ENCODE measurements at regions of chr1 and their contacts with region 1.

Region 1: DNA sequence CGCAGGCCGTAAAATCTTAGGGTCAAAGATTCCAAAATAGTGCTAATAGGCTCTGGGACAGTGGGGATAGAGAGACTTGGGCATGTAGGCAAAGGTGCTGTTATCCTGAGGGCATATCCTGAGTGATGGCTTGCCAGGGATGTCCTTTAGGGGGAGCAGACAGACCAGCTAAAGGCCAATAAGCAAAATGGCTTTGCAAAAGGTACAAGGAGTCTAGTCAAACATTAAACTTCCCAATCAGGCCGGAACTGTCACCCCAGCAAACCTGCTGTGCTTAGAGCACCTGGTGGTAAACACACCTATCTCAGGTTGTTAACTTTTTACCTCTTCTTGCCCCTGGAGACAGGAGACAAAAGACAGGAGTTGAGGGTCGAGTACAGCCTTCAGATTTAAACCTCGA is 49.1 kb downstream of the TRABD2B start:
- DNase-seq: peak; percentile 69 to 80
- H3K4me3 ChIP-seq: no peak overlapping the region
- H3K4me3 Mint-ChIP-seq: no peak overlapping the region
- H3K27ac Mint-ChIP-seq: no peak overlapping the region
- H3K4me1 ChIP-seq: peaks cover 10% of the 10 kb centered on the region; the same call in 1 of the 2 replicates
- H3K4me1 Mint-ChIP-seq: peaks cover 16% of the 10 kb centered on the region
- H3K27me3 ChIP-seq: no peaks in the 10 kb centered on the region
- H3K27me3 Mint-ChIP-seq: no peaks in the 10 kb centered on the region
- CTCF ChIP-seq: peak; percentile 62 to 66

Region 2: DNA sequence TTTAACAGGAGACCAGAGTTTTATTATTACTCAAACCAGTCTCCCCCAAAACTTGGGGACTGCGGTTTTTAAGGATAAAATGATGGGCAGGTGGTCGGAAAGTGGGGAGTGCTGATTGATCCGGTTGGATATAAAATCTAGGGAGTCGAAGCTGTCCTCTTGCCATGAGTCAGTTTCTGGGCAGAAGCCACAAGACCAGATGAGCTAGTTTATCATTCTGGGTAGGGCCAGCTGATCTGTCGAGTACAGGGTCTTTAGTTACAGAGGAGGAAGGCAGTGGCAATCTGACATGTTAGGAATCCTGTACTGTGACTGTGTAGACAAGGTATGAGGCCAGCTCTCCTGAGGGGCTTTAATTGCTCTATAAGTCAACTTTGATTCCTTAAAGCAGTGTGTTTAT is 555.0 kb before region 1 on chr1:
- CTCF ChIA-PET with region 1: no interaction called
- POLR2A ChIA-PET with region 1: no interaction called
- intact Hi-C with region 1: no loop called
- DNase-seq: no peak
- H3K4me3 ChIP-seq: no peak overlapping the region
- H3K4me3 Mint-ChIP-seq: no peak overlapping the region
- H3K27ac Mint-ChIP-seq: no peak overlapping the region
- H3K4me1 ChIP-seq: peaks cover 31% of the 10 kb centered on the region
- H3K4me1 Mint-ChIP-seq: peaks cover 45% of the 10 kb centered on the region
- H3K27me3 ChIP-seq: no peaks in the 10 kb centered on the region
- H3K27me3 Mint-ChIP-seq: no peaks in the 10 kb centered on the region
- CTCF ChIP-seq: no peak

Region 3: DNA sequence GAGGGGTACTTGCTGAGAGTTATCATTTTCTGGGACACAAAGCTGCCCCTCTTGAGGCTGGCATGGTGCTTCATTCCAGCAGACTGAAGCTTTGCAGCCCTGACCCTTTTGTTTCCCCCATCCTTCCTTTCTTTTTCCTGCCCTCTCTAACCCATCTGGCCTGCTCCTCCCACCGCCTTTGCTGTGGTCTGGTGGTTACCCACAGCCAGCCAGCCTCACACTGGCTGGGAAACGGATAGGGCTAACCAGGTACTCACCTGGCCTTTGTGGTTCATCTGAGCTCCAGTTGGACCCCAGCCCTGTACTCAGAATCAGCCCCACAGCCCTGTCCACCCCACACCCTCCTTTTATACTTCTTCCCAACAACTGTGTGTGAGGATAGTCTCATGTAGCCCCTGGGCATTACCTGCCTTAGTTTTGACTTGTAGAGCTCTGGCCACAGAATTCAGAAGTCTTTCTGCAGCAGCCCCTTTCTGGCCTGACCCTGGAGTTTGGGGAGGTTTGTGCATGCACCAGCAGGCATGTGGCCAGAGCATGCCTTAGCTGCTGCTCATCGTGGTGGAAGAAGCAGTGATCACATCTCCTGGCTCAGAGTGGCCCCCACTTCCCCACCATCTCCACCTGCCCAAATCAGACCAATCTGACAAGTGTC is 88.9 kb before region 1 on chr1:
- CTCF ChIA-PET with region 1: no interaction called
- POLR2A ChIA-PET with region 1: no interaction called
- intact Hi-C with region 1: no loop called
- DNase-seq: no peak
- H3K4me3 ChIP-seq: no peak overlapping the region
- H3K4me3 Mint-ChIP-seq: no peak overlapping the region
- H3K27ac Mint-ChIP-seq: no peak overlapping the region
- H3K4me1 ChIP-seq: no peaks in the 10 kb centered on the region
- H3K4me1 Mint-ChIP-seq: no peaks in the 10 kb centered on the region
- H3K27me3 ChIP-seq: no peaks in the 10 kb centered on the region; the same call in 1 of the 2 replicates
- H3K27me3 Mint-ChIP-seq: peaks cover 2% of the 10 kb centered on the region
- CTCF ChIP-seq: no peak

Region 4: GRCh38 chr1:47986761-47987200 is 38.7 kb after region 1 on chr1:
- CTCF ChIA-PET with region 1: no interaction called
- POLR2A ChIA-PET with region 1: no interaction called
- intact Hi-C with region 1: no loop called
- DNase-seq: no peak
- H3K4me3 ChIP-seq: no peak overlapping the region
- H3K4me3 Mint-ChIP-seq: no peak overlapping the region
- H3K27ac Mint-ChIP-seq: no peak overlapping the region
- H3K4me1 ChIP-seq: no peaks in the 10 kb centered on the region
- H3K4me1 Mint-ChIP-seq: peaks cover 6% of the 10 kb centered on the region
- H3K27me3 ChIP-seq: no peaks in the 10 kb centered on the region
- H3K27me3 Mint-ChIP-seq: no peaks in the 10 kb centered on the region
- CTCF ChIP-seq: no peak

Region 5: DNA sequence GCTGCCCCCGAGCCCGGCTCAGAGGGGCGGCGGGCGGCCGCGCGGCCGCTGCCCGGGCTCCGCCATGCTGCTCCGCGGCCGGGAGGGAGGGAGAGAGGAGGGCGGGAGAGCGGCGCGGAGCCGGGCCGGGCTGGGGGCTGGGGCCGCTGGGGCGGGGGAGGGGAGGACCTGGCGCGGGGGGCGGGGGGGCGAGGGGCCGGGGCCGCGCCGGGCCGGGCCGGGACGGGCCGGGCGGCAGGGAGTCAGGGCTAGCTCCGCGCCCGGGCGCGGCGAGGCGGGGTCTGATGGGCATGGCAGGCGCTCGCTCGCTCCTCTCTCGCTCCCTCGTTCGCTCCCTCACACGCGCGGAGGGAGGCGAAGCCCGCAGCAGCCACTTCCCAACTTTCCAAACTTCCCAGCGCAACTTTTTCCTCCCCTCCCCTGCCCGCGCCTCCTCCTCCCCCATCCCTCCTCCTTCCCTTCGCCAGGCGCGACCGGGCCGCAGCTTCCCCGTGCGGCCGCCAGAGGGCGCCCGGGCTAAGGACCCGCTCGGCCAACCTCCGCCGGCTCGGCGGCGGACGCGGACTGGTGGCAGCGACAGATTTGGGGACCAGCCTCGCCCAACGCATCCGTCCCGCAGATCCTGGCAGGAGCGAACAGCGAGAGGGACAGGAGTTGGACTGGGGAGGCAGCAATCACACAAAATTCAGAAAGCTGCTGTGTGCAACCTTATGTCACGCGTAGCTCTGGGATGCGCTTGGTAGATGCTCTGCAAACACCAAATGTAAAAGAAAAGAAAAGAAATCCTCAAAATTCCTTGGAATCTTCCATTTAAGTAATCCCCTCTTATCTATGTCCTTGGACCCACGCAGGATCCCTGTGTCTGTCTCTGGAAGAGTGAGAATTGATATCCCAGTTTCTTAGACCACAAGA is 49.4 kb after region 1 on chr1 and contains the start of gene TRABD2B:
- CTCF ChIA-PET with region 1: no interaction called
- POLR2A ChIA-PET with region 1: no interaction called
- intact Hi-C with region 1: loop called (anchors 1 kb)
- DNase-seq: peak; percentile 53 to 82
- H3K4me3 ChIP-seq: peak within 1 kb of the TSS; percentile 68
- H3K4me3 Mint-ChIP-seq: peak within 1 kb of the TSS; percentile 79
- H3K27ac Mint-ChIP-seq: no peak within 1 kb of the TSS
- H3K4me1 ChIP-seq: no peaks in the 10 kb centered on the region
- H3K4me1 Mint-ChIP-seq: peaks cover 8% of the 10 kb centered on the region
- H3K27me3 ChIP-seq: no peaks in the 10 kb centered on the region
- H3K27me3 Mint-ChIP-seq: peaks cover 17% of the 10 kb centered on the region
- CTCF ChIP-seq: peak; percentile 78 to 89
- total RNA-seq, gene TRABD2B: 0.36 and 0.39 TPM in 2 replicates

Region 6: GRCh38 chr1:48061162-48062136 is 113.3 kb after region 1 on chr1:
- CTCF ChIA-PET with region 1: no interaction called
- POLR2A ChIA-PET with region 1: no interaction called
- intact Hi-C with region 1: loop called (anchors 1 kb)
- DNase-seq: peak; percentile 45 to 69
- H3K4me3 ChIP-seq: no peak overlapping the region
- H3K4me3 Mint-ChIP-seq: no peak overlapping the region
- H3K27ac Mint-ChIP-seq: no peak overlapping the region
- H3K4me1 ChIP-seq: no peaks in the 10 kb centered on the region
- H3K4me1 Mint-ChIP-seq: peaks cover 10% of the 10 kb centered on the region
- H3K27me3 ChIP-seq: no peaks in the 10 kb centered on the region
- H3K27me3 Mint-ChIP-seq: no peaks in the 10 kb centered on the region
- CTCF ChIP-seq: peak; percentile 61 to 62

Region 7: DNA sequence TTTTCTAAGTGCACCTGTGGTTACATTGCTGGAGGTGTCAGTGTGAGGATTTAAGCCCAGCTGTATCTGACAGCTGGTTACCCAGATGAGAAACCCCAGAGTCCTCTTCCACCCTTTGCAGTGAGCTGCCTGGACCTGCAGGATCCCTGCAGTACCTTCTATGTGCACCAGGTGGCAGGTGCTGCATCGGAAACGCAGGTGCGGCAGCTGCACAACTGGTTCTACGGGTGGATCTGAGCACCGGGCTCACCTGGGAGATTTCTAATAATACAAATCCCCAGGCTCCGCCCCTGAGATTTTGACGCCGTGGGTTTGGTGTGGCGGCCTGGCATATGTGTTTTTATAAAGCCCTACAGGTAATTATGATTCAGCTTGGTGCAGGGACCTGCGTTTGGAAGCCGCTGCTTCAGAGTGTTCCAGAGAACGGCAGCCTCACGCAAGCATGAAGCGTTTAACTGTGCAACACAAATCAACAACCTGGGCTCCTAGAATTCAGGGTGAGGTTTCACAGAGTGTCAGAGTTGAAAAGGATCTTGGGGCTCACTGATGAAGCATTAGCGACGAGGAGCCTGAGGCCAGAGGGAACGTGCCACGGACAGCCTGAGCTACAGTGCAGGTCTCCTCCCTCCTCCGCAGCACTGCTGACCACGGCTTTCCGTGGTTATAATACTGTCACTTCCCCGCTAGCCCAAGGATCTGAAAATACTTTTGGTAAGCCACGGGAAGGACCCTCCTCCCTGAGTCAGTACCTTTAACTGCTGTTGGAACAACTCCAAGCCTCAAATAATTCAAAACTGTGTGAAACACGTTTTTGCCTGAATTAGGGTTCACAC is 145.8 kb after region 1 on chr1:
- CTCF ChIA-PET with region 1: no interaction called
- POLR2A ChIA-PET with region 1: no interaction called
- intact Hi-C with region 1: loop called (anchors 1 kb)
- DNase-seq: peak; percentile 85 to 90
- H3K4me3 ChIP-seq: peak overlapping the region; percentile 27
- H3K4me3 Mint-ChIP-seq: peak overlapping the region; percentile 77
- H3K27ac Mint-ChIP-seq: no peak overlapping the region
- H3K4me1 ChIP-seq: no peaks in the 10 kb centered on the region
- H3K4me1 Mint-ChIP-seq: no peaks in the 10 kb centered on the region
- H3K27me3 ChIP-seq: no peaks in the 10 kb centered on the region
- H3K27me3 Mint-ChIP-seq: peaks cover 3% of the 10 kb centered on the region
- CTCF ChIP-seq: peak; percentile 82 to 90

Region 8: DNA sequence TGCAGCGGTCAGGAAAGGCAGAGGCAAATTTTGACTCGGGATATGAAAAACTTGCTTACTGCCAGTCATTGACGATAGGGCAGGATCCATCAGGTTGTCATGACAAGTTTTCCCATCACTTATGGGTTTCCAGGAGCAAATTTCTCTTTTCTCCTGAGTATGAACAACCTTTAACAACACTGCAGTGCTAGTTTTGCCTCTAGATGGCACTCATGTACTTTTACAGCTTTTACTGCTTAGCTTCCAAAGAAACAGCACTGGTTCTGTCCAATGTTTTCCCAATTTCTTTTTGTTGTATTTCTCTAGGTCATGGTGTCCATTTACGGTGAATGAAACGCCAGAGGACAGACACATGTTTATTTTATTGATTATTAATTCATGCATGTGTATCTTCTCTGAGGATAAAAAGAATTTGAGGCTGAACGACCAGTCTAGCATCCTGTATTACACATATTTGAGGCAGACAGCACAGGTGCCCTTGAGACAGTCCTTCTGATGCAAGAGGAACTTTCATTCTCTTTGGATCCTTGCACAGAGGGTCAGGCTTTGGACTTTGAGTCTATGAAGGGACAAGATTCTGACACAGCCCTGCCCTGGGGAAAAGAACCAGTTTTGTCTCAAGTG is 161.4 kb after region 1 on chr1:
- CTCF ChIA-PET with region 1: no interaction called
- POLR2A ChIA-PET with region 1: no interaction called
- intact Hi-C with region 1: loop called (anchors 1 kb)
- DNase-seq: peak in 1 of 2 experiments; percentile 48
- H3K4me3 ChIP-seq: no peak overlapping the region
- H3K4me3 Mint-ChIP-seq: no peak overlapping the region
- H3K27ac Mint-ChIP-seq: no peak overlapping the region
- H3K4me1 ChIP-seq: no peaks in the 10 kb centered on the region
- H3K4me1 Mint-ChIP-seq: no peaks in the 10 kb centered on the region
- H3K27me3 ChIP-seq: no peaks in the 10 kb centered on the region
- H3K27me3 Mint-ChIP-seq: peaks cover 2% of the 10 kb centered on the region
- CTCF ChIP-seq: peak; percentile 72 to 76

Region 9: DNA sequence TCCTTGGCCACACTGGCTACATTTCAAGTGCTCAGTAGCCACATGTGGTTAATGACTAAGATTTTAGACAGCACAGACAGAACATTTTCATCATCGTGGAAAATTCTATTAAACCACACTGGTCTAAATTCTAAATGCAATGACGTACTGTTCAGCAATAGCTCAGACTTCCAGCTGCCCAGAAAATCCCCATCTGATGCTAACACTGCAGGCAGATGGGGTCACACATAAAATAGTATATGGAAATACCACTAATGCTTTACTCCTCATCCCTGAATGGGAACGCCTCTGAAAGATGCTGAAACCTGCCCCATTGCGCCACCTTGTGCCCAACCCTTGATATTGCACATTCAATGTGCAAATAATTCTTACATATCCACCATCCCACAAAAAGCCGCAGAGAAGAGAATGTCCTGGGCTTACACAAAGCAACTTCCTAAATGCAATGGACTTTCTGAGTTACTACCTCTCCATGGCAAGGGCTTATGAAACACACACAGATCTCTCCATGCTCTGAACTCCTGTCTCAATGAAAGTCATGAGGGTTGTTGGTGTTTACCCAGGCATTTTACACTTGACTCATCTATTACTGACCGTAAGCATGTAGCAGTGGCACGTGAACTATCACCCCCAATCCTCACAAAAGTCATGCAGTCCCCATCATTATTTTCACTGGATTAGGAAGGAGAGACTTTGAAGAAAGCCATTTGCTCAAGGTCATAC is 254.1 kb after region 1 on chr1:
- CTCF ChIA-PET with region 1: no interaction called
- POLR2A ChIA-PET with region 1: no interaction called
- intact Hi-C with region 1: loop called (anchors 5 kb)
- DNase-seq: peak; percentile 52 to 66
- H3K4me3 ChIP-seq: no peak overlapping the region
- H3K4me3 Mint-ChIP-seq: no peak overlapping the region
- H3K27ac Mint-ChIP-seq: no peak overlapping the region
- H3K4me1 ChIP-seq: no peaks in the 10 kb centered on the region
- H3K4me1 Mint-ChIP-seq: no peaks in the 10 kb centered on the region
- H3K27me3 ChIP-seq: no peaks in the 10 kb centered on the region
- H3K27me3 Mint-ChIP-seq: peaks cover 3% of the 10 kb centered on the region
- CTCF ChIP-seq: peak; percentile 72 to 76

Region 10: GRCh38 chr1:48236716-48237470 is 288.8 kb after region 1 on chr1:
- CTCF ChIA-PET with region 1: no interaction called
- POLR2A ChIA-PET with region 1: no interaction called
- intact Hi-C with region 1: loop called (anchors 2 kb)
- DNase-seq: peak in 1 of 2 experiments; percentile 41
- H3K4me3 ChIP-seq: no peak overlapping the region
- H3K4me3 Mint-ChIP-seq: no peak overlapping the region
- H3K27ac Mint-ChIP-seq: no peak overlapping the region
- H3K4me1 ChIP-seq: no peaks in the 10 kb centered on the region
- H3K4me1 Mint-ChIP-seq: peaks cover 8% of the 10 kb centered on the region
- H3K27me3 ChIP-seq: no peaks in the 10 kb centered on the region
- H3K27me3 Mint-ChIP-seq: no peaks in the 10 kb centered on the region
- CTCF ChIP-seq: peak; percentile 44 to 72